MCF 10A (cell line): ENCODE measurements at regions of chr1 and their contacts with region 1.

Region 1: DNA sequence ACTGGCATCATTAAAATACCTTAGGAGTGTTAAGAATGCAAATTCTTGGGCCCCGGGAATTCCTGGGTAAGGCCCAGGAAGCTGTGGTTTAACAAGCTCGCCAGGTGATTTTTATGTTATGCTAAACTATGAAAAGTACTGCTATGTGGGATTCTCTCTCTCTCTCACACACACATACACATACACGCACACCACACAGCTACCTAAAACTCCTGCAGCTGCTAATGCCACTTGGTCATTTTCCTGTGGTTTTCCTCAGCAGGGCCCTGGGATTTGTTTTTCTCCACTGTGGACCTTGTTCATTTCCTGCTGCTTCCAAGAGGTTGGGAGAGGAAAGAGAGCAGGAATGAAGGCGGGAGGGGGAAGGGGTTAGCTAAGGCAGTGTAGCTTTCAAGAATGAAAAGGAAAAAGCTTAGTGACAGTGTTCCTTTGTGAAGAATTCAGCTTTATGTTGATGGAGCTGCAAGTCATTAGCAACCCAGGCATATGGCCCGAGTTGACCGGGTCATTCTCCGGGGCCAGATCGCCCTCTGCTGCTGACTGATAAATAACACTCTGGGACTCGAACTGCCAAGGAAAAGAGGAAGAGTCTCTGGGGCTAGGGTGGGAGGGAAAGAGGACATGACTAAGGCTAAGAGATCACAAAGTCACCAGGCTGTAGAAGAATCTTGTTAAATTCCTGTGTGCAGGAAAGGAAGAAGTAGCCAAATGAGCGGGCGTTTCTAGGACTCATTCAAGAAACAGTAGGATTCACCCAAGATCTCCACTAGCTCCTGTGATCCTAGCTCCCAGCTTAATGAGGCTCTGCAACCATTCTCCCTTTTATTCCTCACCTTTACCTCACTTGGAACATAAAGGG is 30.5 kb upstream of the LRIG2 start:
- DNase-seq: peak; percentile 85
- H3K4me3 Mint-ChIP-seq: no peak overlapping the region
- H3K27ac Mint-ChIP-seq: no peak overlapping the region
- H3K4me1 Mint-ChIP-seq: peaks cover 14% of the 10 kb centered on the region
- H3K27me3 Mint-ChIP-seq: no peaks in the 10 kb centered on the region
- CTCF ChIP-seq: peak; percentile 64

Region 2: DNA sequence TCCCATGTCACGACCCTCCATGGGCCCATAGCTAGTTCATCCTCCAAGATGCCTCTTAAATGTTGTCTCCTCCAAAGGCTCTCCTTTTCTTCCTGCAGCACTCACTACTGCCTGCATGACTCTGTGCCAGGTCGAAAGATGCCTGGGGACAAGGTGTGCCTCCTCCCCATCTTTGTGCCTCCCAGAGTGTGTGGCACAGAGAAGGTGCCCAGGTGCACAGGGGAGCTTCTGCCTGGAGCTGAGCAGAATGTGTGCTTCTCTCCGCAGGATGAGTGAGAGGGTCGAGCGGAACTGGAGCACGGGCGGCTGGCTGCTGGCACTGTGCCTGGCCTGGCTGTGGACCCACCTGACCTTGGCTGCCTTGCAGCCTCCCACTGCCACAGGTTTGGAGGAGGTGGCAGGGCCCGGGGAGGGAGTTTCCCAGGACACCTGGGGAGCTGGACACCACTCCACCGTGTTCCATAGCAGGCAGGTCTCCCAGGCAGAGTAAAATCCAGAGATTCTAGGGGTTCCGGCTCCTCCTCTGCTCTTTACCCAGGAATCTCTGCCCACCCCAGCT is 320.5 kb before region 1 on chr1:
- CTCF ChIA-PET with region 1: interaction called, 41 read pairs
- POLR2A ChIA-PET with region 1: no interaction called
- intact Hi-C with region 1: loop called (anchors 1 kb)
- DNase-seq: no peak
- H3K4me3 Mint-ChIP-seq: no peak overlapping the region
- H3K27ac Mint-ChIP-seq: no peak overlapping the region
- H3K4me1 Mint-ChIP-seq: peaks cover 5% of the 10 kb centered on the region
- H3K27me3 Mint-ChIP-seq: no peaks in the 10 kb centered on the region
- CTCF ChIP-seq: no peak

Region 3: GRCh38 chr1:112809253-112809684 is 233.2 kb before region 1 on chr1:
- CTCF ChIA-PET with region 1: interaction called, 86 read pairs
- POLR2A ChIA-PET with region 1: interaction called, 4 read pairs
- intact Hi-C with region 1: loop called (anchors 1 kb)
- DNase-seq: peak; percentile 80
- H3K4me3 Mint-ChIP-seq: no peak overlapping the region
- H3K27ac Mint-ChIP-seq: no peak overlapping the region
- H3K4me1 Mint-ChIP-seq: peaks cover 5% of the 10 kb centered on the region
- H3K27me3 Mint-ChIP-seq: no peaks in the 10 kb centered on the region
- CTCF ChIP-seq: peak; percentile 82

Region 4: DNA sequence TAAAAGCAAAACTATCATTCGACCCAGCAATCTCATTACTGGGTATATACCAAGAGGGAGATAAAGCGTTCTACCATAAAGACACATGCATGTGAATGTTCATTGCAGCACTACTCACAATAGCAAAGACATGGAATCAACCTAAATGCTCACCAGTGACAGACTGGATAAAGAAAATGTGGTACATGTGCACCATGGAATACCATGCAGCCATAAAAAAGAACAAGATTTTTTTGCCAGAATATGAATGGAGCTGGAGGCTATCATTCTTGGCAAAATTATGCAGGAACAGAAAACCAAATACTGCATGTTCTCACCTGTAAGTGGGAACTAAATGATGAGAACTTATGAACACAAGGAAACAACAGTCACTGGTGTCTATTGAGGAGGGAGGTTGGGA is 166.2 kb before region 1 on chr1:
- CTCF ChIA-PET with region 1: interaction called, 125 read pairs
- POLR2A ChIA-PET with region 1: interaction called, 12 read pairs
- intact Hi-C with region 1: loop called (anchors 1 kb)
- DNase-seq: no peak
- H3K4me3 Mint-ChIP-seq: no peak overlapping the region
- H3K27ac Mint-ChIP-seq: no peak overlapping the region
- H3K4me1 Mint-ChIP-seq: peaks cover 22% of the 10 kb centered on the region
- H3K27me3 Mint-ChIP-seq: no peaks in the 10 kb centered on the region
- CTCF ChIP-seq: no peak

Region 5: DNA sequence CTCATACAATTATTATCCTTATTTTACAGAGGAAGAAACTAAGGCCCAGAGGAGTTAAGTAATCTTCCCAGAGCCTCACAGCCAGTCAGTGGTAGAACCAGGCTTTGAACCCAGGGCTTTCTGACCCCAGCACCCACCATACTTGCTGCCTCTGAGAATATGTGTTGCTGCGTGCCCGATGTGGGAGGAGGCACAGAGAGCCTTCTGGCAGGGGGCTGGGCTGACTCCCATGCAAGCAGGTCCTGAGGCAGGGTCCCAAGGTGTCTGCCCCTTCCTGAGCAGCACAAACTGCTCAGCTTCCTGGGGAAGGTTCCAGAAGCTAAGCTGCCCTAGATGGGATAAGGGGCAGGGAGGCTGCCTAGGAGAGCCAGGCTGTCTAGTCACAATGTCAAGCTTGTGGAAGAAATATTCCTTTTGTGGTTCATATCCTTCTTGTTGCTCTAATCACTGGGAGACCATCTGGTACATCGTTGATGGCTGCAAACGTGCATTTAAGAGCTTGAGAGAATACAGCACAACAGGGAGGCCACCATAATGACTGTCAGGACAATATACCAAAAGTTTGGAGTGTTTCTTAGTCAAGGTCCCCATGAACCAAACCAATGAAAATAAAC is 154.0 kb before region 1 on chr1:
- CTCF ChIA-PET with region 1: interaction called, 125 read pairs
- POLR2A ChIA-PET with region 1: interaction called, 3 read pairs
- intact Hi-C with region 1: no loop called
- DNase-seq: no peak
- H3K4me3 Mint-ChIP-seq: no peak overlapping the region
- H3K27ac Mint-ChIP-seq: no peak overlapping the region
- H3K4me1 Mint-ChIP-seq: no peaks in the 10 kb centered on the region
- H3K27me3 Mint-ChIP-seq: no peaks in the 10 kb centered on the region
- CTCF ChIP-seq: no peak

Region 6: GRCh38 chr1:113021430-113022086 is 21.0 kb before region 1 on chr1:
- CTCF ChIA-PET with region 1: interaction called, 10 read pairs
- POLR2A ChIA-PET with region 1: interaction called, 6 read pairs
- intact Hi-C with region 1: no loop called
- DNase-seq: peak; percentile 86
- H3K4me3 Mint-ChIP-seq: peak overlapping the region; percentile 32
- H3K27ac Mint-ChIP-seq: peak overlapping the region; percentile 90
- H3K4me1 Mint-ChIP-seq: peaks cover 10% of the 10 kb centered on the region
- H3K27me3 Mint-ChIP-seq: no peaks in the 10 kb centered on the region
- CTCF ChIP-seq: no peak

Region 7: GRCh38 chr1:113101588-113101987 is 59.1 kb after region 1 on chr1:
- CTCF ChIA-PET with region 1: no interaction called
- POLR2A ChIA-PET with region 1: no interaction called
- intact Hi-C with region 1: no loop called
- DNase-seq: no peak
- H3K4me3 Mint-ChIP-seq: no peak overlapping the region
- H3K27ac Mint-ChIP-seq: no peak overlapping the region
- H3K4me1 Mint-ChIP-seq: no peaks in the 10 kb centered on the region
- H3K27me3 Mint-ChIP-seq: no peaks in the 10 kb centered on the region
- CTCF ChIP-seq: no peak